GM12878 (cell line): ENCODE measurements at regions of chr12 and their contacts with region 1.

Region 1: DNA sequence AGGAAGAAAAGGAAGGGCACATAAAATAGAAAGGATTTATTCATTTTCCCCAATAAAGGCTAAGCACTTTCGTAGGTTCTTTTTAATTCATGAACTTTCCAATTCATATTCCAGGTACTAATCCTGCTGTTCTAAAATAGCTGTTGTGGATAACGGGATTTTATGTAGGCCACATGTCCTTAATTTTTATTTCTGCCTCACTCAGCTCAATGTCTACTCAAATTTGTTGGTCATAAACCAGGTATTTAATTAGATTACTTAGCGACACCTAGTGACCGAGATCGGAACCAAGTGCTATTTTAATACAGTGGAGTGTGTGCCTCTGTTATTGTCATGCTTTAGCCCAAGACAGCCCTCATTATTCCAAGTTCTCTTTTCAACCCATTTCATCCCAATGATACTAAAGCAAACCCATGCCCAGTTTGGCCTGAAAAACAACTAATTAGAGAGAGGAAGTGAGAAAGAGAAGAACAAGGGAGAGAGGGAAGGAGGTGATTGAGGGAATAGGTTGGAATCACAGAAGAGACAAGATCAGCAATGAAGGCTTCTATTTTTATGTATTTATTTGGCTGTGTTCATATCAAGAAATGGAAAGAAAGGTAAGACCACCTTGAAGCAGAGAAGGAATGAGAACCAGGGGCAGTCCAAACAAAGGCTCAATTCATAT is 45.9 kb upstream of the IFNG-AS1 start:
- DNase-seq: peak; percentile 23
- ATAC-seq: peak; percentile 93
- H3K4me3 ChIP-seq: no peak overlapping the region
- H3K27ac ChIP-seq: no peak overlapping the region
- H3K4me1 ChIP-seq: no peaks in the 10 kb centered on the region
- H3K27me3 ChIP-seq: peaks cover 0 to 2% of the 10 kb centered on the region in 2 experiments; a peak in 2 of 4 replicates
- CTCF ChIP-seq: peak; percentile 48 to 71 (median 66); a peak in 5 of 6 replicates
- EP300 ChIP-seq: no peak
- POLR2A ChIP-seq: no peak
- RAD21 ChIP-seq: peak; percentile 83

Region 2: DNA sequence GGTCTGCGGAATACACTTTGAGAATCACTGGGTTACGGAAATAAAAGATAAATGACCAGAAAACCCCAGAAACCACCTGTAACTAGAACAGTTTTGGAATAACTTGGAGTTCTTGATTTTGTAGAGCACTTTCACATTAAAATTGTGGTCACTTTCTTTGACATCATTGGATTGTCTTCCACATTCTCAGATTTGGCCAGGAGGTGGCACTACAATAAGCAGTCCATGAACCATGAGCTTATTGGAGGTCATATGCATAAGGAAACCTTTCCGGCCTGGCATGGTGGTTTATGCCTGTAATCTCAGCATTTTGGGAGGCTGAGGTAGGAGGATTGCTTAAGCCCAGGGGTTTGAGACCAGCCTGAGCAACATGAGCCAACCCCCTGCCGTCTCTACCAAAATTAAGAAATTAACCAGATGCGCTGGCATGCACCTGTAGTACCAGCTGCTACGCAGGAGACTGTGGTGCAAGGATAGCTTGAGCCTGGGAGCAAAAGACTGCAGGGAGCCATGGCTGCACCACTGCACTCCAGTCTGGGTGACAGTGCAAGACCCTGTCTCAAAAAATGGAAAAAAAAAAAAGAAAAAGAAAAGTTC is 781.9 kb before region 1 on chr12:
- CTCF ChIA-PET with region 1: interaction called, 9 read pairs
- POLR2A ChIA-PET with region 1: no interaction called
- RAD21 ChIA-PET with region 1: interaction called, 9 read pairs
- SMC1A ChIA-PET with region 1: interaction called, 4 read pairs
- in situ Hi-C with region 1: no loop called
- intact Hi-C with region 1: loop called (anchors 2 kb)
- DNase-seq: no peak
- ATAC-seq: peak; percentile 82
- H3K4me3 ChIP-seq: no peak overlapping the region
- H3K27ac ChIP-seq: no peak overlapping the region
- H3K4me1 ChIP-seq: no peaks in the 10 kb centered on the region
- H3K27me3 ChIP-seq: no peaks in the 10 kb centered on the region; a peak in 1 of 4 replicates
- CTCF ChIP-seq: peak; percentile 46 to 58 (median 56)
- EP300 ChIP-seq: no peak
- POLR2A ChIP-seq: no peak
- RAD21 ChIP-seq: peak; percentile 59

Region 3: DNA sequence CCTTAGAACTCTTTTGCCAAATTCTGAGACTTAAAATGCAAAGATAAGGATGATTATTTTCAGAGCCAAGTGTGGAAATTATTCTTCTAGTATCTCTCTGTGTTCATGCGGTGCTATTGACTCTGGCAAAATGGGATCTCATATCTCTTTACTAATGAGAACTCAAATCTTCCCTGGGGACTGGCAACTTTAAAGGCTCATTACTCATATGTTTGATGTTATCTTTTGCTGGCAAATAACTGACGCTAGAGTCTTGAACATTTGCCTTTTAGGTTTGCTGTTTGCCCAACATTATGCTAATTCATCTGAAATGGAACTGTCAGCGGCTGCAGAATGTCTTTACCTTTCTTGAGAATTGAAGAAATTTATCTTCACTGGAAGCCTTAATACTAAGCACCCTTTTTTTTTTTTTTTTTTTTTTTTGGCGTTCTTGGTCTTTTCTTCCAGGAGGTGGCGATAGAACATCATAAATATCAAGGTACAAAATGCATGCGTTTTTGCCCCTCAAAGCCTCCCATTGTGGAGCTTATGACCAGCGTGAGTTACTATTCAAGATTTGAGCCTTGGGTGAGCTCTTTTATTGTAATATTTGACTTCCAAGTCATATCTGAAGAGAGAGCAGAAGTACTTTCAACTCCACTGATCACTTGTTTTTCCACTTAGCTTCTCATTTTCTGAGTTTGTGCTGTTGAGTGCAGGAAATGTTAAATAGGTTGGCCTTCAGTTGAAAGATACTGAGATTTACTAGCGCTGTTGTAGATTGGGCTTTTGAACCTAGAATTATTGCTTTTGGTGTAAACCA is 587.6 kb before region 1 on chr12:
- CTCF ChIA-PET with region 1: interaction called, 115 read pairs
- POLR2A ChIA-PET with region 1: interaction called, 3 read pairs
- RAD21 ChIA-PET with region 1: interaction called, 63 read pairs
- SMC1A ChIA-PET with region 1: interaction called, 77 read pairs
- in situ Hi-C with region 1: loop called (anchors 5 kb)
- intact Hi-C with region 1: loop called (anchors 1 kb)
- DNase-seq: peak; percentile 16
- ATAC-seq: peak; percentile 76
- H3K4me3 ChIP-seq: no peak overlapping the region
- H3K27ac ChIP-seq: no peak overlapping the region
- H3K4me1 ChIP-seq: no peaks in the 10 kb centered on the region
- H3K27me3 ChIP-seq: no peaks in the 10 kb centered on the region
- CTCF ChIP-seq: peak; percentile 42 to 58 (median 53); a peak in 5 of 6 replicates
- EP300 ChIP-seq: no peak
- POLR2A ChIP-seq: no peak
- RAD21 ChIP-seq: peak; percentile 78

Region 4: DNA sequence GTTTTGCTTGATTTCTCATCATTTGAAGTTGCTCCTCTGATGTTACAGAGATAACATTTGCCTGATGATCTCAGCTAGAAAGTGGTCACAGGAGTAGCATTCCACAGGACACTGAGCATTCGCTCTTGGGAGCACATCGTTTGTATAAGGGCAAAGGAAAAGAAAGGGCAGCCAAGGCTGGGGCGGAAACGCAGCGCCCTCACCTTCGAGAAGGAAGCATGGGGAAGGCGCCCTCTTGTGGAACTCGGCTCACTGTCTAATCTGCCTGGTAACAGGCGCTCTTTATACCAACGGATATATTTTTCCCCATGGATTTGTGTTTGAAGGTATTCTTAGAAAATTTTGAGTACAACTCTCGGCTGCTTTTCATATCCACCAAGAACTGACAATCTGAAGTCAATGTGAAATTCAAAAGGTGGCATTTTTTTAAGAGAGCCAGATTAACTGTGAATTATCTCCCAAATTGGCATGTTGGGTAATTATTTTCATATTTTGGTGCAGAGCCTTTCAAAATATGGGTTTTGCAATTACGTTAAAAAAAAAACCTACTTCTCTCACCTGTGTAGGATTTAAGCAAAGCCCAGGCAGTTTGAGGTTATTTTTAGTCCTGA is 501.5 kb before region 1 on chr12:
- CTCF ChIA-PET with region 1: interaction called, 22 read pairs
- POLR2A ChIA-PET with region 1: no interaction called
- RAD21 ChIA-PET with region 1: interaction called, 3 read pairs
- SMC1A ChIA-PET with region 1: interaction called, 3 read pairs
- in situ Hi-C with region 1: loop called (anchors 10 kb)
- intact Hi-C with region 1: no loop called
- DNase-seq: no peak
- ATAC-seq: peak; percentile 98
- H3K4me3 ChIP-seq: no peak overlapping the region
- H3K27ac ChIP-seq: no peak overlapping the region
- H3K4me1 ChIP-seq: peaks cover 8% of the 10 kb centered on the region; the same call in 1 of the 2 replicates
- H3K27me3 ChIP-seq: no peaks in the 10 kb centered on the region; a peak in 1 of 4 replicates
- CTCF ChIP-seq: peak; percentile 68 to 82 (median 76)
- EP300 ChIP-seq: no peak
- POLR2A ChIP-seq: no peak
- RAD21 ChIP-seq: peak; percentile 77

Region 5: DNA sequence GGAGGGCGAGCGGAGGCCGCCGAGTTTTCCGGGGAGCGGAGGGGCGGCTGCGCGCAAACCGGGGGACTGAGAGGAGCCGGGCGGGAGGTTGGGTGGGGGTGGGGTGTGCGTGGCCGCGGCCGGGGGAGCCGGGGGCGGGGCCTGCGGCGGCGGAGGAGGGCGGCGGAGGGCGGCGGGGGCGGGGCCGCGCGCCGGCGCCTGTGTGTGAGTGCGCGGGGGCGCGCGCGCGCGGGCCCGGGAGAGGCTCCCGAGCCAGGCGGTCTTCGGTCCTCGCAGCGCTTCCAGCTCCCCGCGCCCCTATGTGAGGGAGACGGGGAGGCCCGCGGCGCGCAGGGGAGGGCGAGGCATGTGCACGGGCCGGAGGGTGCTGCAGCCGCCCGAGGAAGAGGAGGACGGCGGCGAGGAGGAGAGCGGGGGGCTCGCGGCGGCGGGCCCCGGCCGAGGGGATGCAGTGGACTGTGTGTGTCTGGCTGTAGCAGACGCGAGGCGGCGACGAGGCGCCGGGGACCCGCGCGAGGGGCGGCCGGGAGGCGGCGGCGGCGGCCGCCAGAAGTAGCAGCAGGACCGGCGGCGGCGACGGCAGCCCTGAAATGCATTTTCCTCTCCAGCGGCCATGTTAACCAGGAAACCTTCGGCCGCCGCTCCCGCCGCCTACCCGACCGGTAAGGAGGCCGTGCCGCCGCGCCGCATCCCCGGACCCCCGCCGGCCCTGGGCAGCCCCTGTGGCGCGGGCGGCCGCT is 294.7 kb before region 1 on chr12 and contains the start of gene DYRK2:
- CTCF ChIA-PET with region 1: interaction called, 9 read pairs
- POLR2A ChIA-PET with region 1: interaction called, 3 read pairs
- RAD21 ChIA-PET with region 1: interaction called, 4 read pairs
- SMC1A ChIA-PET with region 1: interaction called, 3 read pairs
- in situ Hi-C with region 1: no loop called
- intact Hi-C with region 1: loop called (anchors 1 kb)
- DNase-seq: no peak
- ATAC-seq: peak; percentile 56
- H3K4me3 ChIP-seq: peak within 1 kb of the TSS; percentile 100
- H3K27ac ChIP-seq: peak within 1 kb of the TSS; percentile 70
- H3K4me1 ChIP-seq: peaks cover 6% of the 10 kb centered on the region
- H3K27me3 ChIP-seq: no peaks in the 10 kb centered on the region
- CTCF ChIP-seq: 0 out of 6 replicates have a peak, but pooled peaks of 1 of the 3 experiments have one; percentile 3
- EP300 ChIP-seq: no peak
- POLR2A ChIP-seq: peak; percentile 94
- RAD21 ChIP-seq: no peak
- polyA plus RNA-seq, gene DYRK2: 3.1 to 3.2 TPM

Region 6: GRCh38 chr12:67780580-67781084 is 162.7 kb before region 1 on chr12:
- CTCF ChIA-PET with region 1: no interaction called
- POLR2A ChIA-PET with region 1: no interaction called
- RAD21 ChIA-PET with region 1: no interaction called
- SMC1A ChIA-PET with region 1: no interaction called
- in situ Hi-C with region 1: no loop called
- intact Hi-C with region 1: no loop called
- DNase-seq: no peak
- ATAC-seq: no peak
- H3K4me3 ChIP-seq: no peak overlapping the region
- H3K27ac ChIP-seq: no peak overlapping the region
- H3K4me1 ChIP-seq: no peaks in the 10 kb centered on the region
- H3K27me3 ChIP-seq: no peaks in the 10 kb centered on the region
- CTCF ChIP-seq: no peak
- EP300 ChIP-seq: no peak
- POLR2A ChIP-seq: no peak
- RAD21 ChIP-seq: no peak

Region 7: DNA sequence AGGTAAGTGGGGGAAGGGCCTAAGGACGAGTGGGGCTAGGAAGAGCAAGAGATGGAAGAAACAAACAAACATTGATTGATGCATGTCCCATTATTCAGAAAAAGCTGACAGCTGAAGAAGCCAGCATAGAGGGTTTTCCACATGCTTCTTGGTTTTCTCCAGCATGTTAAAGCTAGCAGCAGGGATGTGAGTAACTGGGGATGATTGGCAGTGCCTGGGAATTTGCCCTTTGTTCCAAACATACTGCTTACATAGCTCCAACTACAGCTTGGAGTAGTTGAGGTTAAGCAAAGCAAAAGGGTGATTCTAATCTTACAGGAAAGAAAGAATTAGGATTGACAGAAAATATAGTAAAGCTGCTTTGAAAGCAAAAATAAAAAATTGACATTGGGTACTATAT is 22.1 kb before region 1 on chr12:
- CTCF ChIA-PET with region 1: interaction called, 16 read pairs
- POLR2A ChIA-PET with region 1: no interaction called
- RAD21 ChIA-PET with region 1: interaction called, 3 read pairs
- SMC1A ChIA-PET with region 1: interaction called, 6 read pairs
- in situ Hi-C with region 1: no loop called
- intact Hi-C with region 1: no loop called
- DNase-seq: no peak
- ATAC-seq: no peak
- H3K4me3 ChIP-seq: no peak overlapping the region
- H3K27ac ChIP-seq: no peak overlapping the region
- H3K4me1 ChIP-seq: no peaks in the 10 kb centered on the region
- H3K27me3 ChIP-seq: peaks cover 0 to 1% of the 10 kb centered on the region in 2 experiments; a peak in 2 of 4 replicates
- CTCF ChIP-seq: no peak
- EP300 ChIP-seq: no peak
- POLR2A ChIP-seq: no peak
- RAD21 ChIP-seq: no peak

Region 8: GRCh38 chr12:67991158-67991557 is 47.8 kb after region 1 on chr12:
- CTCF ChIA-PET with region 1: interaction called, 17 read pairs
- POLR2A ChIA-PET with region 1: interaction called, 4 read pairs
- RAD21 ChIA-PET with region 1: interaction called, 4 read pairs
- SMC1A ChIA-PET with region 1: interaction called, 5 read pairs
- in situ Hi-C with region 1: no loop called
- intact Hi-C with region 1: no loop called
- DNase-seq: no peak
- ATAC-seq: peak; percentile 85
- H3K4me3 ChIP-seq: no peak overlapping the region
- H3K27ac ChIP-seq: peak overlapping the region; percentile 54; the same call in 1 of the 2 replicates
- H3K4me1 ChIP-seq: peaks cover 31% of the 10 kb centered on the region
- H3K27me3 ChIP-seq: no peaks in the 10 kb centered on the region
- CTCF ChIP-seq: no peak
- EP300 ChIP-seq: no peak
- POLR2A ChIP-seq: no peak
- RAD21 ChIP-seq: no peak